ENCODE measurements at regions of chr2 and their contacts with region 1.

Region 1: DNA sequence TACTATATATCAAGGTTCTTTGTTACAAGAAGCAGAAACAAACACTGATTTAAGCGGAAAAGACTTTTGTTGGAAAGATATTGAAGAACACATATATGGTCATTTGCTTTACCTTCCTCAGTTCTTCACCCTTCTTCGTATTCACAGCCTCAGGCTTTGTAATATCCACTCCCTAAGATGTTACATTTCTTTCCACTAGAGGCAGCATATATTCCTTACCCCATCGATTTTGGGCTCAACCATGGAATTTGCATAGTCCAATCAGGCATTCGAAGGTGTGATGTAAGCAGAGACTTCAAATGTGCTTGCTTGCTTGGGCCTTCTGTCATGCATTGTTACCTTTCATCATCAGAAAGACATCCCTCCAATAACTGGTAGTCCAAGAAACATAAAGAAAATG is 287.4 kb downstream of the PID1 start:
- DNase-seq: no peak
- H3K4me3 ChIP-seq: no peak overlapping the region
- H3K27ac ChIP-seq: no peak overlapping the region
- H3K4me1 ChIP-seq: no peaks in the 10 kb centered on the region
- H3K27me3 ChIP-seq: no peaks in the 10 kb centered on the region
- CTCF ChIP-seq: no peak
- EP300 ChIP-seq: no peak
- POLR2A ChIP-seq: no peak

Region 2: DNA sequence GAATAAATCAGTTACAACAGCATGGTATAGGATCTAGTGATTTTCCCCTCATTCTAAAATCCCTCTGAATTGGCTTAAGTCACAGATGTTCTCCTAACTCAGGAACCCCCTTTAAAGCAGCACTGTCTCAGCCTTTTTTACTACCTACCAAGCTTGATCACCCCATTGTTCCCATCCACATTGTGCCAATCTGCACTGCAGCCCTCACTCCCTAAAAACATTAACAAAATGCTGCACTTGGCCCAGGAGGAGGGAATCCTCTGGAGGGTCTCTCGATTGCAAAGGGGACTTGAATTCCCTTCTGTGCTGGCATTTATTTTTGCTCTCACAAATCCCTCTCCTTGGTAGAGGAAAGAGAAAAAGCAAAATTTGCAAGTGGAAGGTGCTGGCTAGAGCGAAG is 64.4 kb after region 1 on chr2:
- in situ Hi-C with region 1: no loop called
- intact Hi-C with region 1: loop called (anchors 2 kb)
- DNase-seq: no peak
- H3K4me3 ChIP-seq: no peak overlapping the region
- H3K27ac ChIP-seq: no peak overlapping the region
- H3K4me1 ChIP-seq: peaks cover 0 to 6% (median 0%) of the 10 kb centered on the region in 4 donors
- H3K27me3 ChIP-seq: no peaks in the 10 kb centered on the region
- CTCF ChIP-seq: no peak
- EP300 ChIP-seq: no peak
- POLR2A ChIP-seq: no peak

Measured in transverse colon (tissue), 4 donors.